ENCODE measurements at regions of chr7 and their contacts with region 1.

Region 1: GRCh38 chr7:140653319-140654108 is 12.9 kb upstream of the DENND2A start:
- DNase-seq: peak; percentile 82
- H3K4me3 ChIP-seq: no peak overlapping the region
- H3K27ac ChIP-seq: no peak overlapping the region
- H3K4me1 ChIP-seq: no peaks in the 10 kb centered on the region
- H3K27me3 ChIP-seq: no peaks in the 10 kb centered on the region
- CTCF ChIP-seq: peak; percentile 84

Region 2: DNA sequence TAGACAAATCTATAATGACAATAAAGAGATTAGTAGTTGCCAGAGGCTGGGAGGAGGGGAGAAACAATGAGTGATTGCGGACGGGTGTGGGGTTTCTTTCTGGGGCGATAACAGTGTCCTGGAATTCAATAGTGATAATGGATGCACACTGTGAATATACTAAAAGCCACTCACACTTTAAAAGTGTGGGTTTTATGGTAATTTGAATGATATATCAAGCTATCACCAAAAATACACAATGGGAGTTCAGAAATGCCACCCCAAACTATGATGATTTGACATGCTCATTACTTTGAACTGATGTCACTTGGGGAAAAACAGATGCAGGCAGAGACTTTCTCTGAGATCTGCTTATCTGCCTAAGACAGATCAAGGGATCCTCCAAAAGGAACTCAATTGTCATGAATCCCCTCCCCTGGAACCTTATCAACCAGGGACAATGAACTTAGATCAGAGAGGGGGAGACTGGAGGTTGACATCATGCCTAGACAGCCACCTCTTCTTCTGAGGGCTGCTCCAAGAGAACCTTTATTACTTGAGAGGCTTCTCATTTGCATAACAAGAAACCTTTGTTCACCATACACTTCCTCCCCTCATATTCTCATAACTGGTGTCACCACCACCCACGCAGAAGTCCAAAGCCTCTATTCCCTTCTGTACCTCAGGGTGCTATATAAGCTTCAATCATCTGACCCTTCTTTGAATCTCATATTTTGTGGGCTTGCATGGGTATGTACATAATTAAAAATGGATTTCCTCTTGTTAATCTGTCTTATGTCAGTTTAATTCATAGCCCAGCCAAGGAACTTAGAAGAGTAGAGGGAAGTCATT is 1529.2 kb before region 1 on chr7:
- CTCF ChIA-PET with region 1: no interaction called
- POLR2A ChIA-PET with region 1: no interaction called
- intact Hi-C with region 1: no loop called
- DNase-seq: peak; percentile 7
- H3K4me3 ChIP-seq: no peak overlapping the region
- H3K27ac ChIP-seq: no peak overlapping the region
- H3K4me1 ChIP-seq: peaks cover 3% of the 10 kb centered on the region
- H3K27me3 ChIP-seq: no peaks in the 10 kb centered on the region
- CTCF ChIP-seq: no peak

Region 3: GRCh38 chr7:140397784-140398750 is 255.4 kb before region 1 on chr7 and contains the start of gene SLC37A3:
- CTCF ChIA-PET with region 1: no interaction called
- POLR2A ChIA-PET with region 1: interaction called, 17 read pairs
- intact Hi-C with region 1: no loop called
- DNase-seq: peak; percentile 83
- H3K4me3 ChIP-seq: peak within 1 kb of the TSS; percentile 77
- H3K27ac ChIP-seq: peak within 1 kb of the TSS; percentile 55
- H3K4me1 ChIP-seq: peaks cover 5% of the 10 kb centered on the region
- H3K27me3 ChIP-seq: no peaks in the 10 kb centered on the region
- CTCF ChIP-seq: no peak
- total RNA-seq, gene SLC37A3: 34.4 and 34.7 TPM in 2 replicates

Region 4: DNA sequence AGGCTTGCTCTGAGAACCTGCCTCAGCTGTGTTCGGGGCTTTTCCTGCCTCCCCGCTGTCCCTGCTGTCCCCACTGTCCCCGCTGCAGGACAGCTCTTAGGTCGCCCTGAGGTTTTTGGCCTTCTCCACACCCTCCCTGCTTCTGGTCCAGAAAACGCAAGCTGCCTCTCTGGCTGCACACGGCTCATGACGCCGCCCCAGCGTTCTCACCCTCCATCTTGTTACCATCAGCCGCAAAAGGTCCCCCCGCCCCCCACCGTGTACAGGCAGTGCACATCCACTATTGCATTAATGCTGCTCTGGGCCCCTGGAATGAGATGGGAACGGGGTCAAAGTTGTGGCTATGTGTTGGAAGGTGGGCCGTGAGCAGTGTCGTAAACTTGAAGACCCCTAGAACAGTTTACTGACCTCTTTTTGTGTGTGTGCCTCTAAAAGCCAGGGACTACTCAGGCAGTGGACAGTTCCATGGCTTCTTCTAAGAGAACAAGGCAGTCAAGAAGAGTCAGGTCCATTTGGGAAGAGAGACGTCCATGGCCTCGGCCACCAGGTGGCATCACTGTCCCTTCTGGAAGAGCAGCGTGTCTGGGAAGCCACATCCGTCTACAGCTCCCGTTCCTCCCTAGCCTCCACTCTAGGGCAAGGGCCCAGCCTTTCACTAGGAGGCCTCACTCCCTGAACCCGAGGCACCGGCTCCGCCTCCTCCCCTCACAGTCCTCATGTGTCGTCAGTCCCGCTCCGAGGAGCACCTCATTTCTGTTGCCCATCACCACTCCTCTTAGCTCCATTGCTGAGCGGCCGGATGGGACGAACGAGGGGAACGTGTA is 135.8 kb before region 1 on chr7:
- CTCF ChIA-PET with region 1: interaction called, 25 read pairs
- POLR2A ChIA-PET with region 1: no interaction called
- intact Hi-C with region 1: loop called (anchors 1 kb)
- DNase-seq: peak; percentile 92
- H3K4me3 ChIP-seq: no peak overlapping the region
- H3K27ac ChIP-seq: no peak overlapping the region
- H3K4me1 ChIP-seq: no peaks in the 10 kb centered on the region
- H3K27me3 ChIP-seq: no peaks in the 10 kb centered on the region
- CTCF ChIP-seq: peak; percentile 85

Measured in A673 (cell line).